Endothelial cell of umbilical vein (primary cell): ENCODE measurements at regions of chr1 and their contacts with region 1.

Region 1: DNA sequence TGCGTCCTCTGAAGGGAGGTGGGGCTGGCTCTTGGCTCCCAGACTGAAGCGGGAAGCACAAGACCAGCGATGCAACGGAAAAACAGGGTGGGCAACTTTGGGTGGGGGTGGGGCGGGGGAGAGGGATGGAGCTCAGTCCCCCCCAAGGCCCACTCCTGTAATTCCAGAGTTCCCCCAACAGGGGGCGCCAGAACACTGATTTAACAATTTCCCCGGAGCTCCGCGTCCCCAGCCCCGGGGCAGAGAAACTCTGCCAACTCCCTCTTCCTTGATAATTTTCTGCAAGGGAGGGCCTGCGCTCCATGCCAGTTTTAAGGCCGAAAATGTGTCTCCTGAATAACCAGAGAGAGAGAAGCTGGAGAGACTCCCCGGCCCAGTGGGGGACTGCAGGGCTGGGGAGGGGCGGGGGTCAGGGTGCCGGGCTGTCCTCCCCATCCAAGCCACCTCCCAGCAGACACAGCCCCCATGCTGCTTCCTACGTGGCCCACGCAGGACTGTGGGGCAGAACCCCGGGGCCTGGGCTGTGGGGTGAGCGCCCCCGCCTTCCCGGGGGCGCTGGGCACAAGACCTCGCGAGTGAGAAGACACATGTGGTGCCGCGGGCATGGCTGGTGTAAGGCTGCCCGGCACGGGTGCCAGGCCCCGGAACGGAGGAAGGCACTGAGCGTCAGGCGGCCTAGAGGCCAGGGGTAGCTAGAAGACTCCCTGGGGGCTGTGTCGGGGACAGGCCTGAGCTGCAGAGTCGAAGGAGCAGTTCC is 51.4 kb downstream of the KIF21B start:
- DNase-seq: peak; percentile 39
- H3K4me3 ChIP-seq: no peak overlapping the region
- H3K27ac ChIP-seq: no peak overlapping the region
- H3K4me1 ChIP-seq: no peaks in the 10 kb centered on the region
- H3K27me3 ChIP-seq: no peaks in the 10 kb centered on the region
- CTCF ChIP-seq: peak; percentile 52 to 72
- POLR2A ChIP-seq: no peak

Region 2: GRCh38 chr1:200890818-200891773 is 81.0 kb before region 1 on chr1:
- CTCF ChIA-PET with region 1: interaction called, 11 read pairs
- POLR2A ChIA-PET with region 1: no interaction called
- dilution Hi-C with region 1: no loop called
- intact Hi-C with region 1: no loop called
- DNase-seq: peak; percentile 27
- H3K4me3 ChIP-seq: peak overlapping the region in 2 of 3 experiments; percentile 30 to 47
- H3K27ac ChIP-seq: no peak overlapping the region
- H3K4me1 ChIP-seq: no peaks in the 10 kb centered on the region
- H3K27me3 ChIP-seq: peaks cover 39 to 46% of the 10 kb centered on the region in 2 experiments
- CTCF ChIP-seq: peak; percentile 50
- POLR2A ChIP-seq: no peak

Region 3: DNA sequence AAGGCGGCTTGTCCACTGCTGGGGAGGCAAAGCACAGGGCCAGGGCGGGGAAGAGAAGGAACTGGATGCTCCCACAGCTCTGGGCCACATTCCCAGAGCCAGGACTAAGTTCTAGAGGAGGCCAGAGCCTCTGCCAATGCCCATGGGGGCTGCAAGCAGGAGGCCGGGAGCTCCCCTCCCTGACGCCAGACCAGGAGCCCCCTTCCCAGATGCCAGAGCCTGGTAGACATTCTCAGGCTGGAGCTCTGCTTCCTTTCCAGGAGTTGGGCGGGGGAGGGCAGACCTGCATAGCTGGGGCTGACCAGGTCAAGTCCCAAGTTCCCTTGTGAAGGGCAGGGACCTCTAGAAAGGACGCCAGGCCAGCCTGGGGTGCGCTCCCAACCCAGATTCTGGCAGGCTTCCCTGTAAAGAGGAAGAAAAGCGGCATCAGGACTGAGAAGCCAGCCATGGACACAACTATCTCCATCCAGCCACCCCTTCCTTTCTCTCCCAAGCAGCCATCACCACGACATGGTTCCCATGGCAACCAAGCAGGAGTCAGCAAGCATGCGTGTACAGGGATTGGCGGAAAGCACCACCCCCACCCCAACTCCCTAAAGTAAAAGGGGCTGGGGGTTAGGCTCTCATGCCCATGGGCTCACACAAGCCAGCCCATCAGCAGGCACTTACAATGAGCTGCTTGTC is 38.0 kb after region 1 on chr1:
- CTCF ChIA-PET with region 1: interaction called, 44 read pairs
- POLR2A ChIA-PET with region 1: no interaction called
- dilution Hi-C with region 1: no loop called
- intact Hi-C with region 1: no loop called
- DNase-seq: no peak
- H3K4me3 ChIP-seq: no peak overlapping the region
- H3K27ac ChIP-seq: no peak overlapping the region
- H3K4me1 ChIP-seq: peaks cover 19% of the 10 kb centered on the region
- H3K27me3 ChIP-seq: no peaks in the 10 kb centered on the region
- CTCF ChIP-seq: no peak
- POLR2A ChIP-seq: no peak

Region 4: GRCh38 chr1:201042779-201043461 is 70.8 kb after region 1 on chr1:
- CTCF ChIA-PET with region 1: interaction called, 586 read pairs
- POLR2A ChIA-PET with region 1: no interaction called
- dilution Hi-C with region 1: no loop called
- intact Hi-C with region 1: loop called (anchors 1 kb)
- DNase-seq: peak; percentile 73
- H3K4me3 ChIP-seq: no peak overlapping the region
- H3K27ac ChIP-seq: no peak overlapping the region
- H3K4me1 ChIP-seq: no peaks in the 10 kb centered on the region
- H3K27me3 ChIP-seq: peaks cover 0 to 2% of the 10 kb centered on the region in 2 experiments
- CTCF ChIP-seq: peak; percentile 86 to 91
- POLR2A ChIP-seq: no peak

Region 5: DNA sequence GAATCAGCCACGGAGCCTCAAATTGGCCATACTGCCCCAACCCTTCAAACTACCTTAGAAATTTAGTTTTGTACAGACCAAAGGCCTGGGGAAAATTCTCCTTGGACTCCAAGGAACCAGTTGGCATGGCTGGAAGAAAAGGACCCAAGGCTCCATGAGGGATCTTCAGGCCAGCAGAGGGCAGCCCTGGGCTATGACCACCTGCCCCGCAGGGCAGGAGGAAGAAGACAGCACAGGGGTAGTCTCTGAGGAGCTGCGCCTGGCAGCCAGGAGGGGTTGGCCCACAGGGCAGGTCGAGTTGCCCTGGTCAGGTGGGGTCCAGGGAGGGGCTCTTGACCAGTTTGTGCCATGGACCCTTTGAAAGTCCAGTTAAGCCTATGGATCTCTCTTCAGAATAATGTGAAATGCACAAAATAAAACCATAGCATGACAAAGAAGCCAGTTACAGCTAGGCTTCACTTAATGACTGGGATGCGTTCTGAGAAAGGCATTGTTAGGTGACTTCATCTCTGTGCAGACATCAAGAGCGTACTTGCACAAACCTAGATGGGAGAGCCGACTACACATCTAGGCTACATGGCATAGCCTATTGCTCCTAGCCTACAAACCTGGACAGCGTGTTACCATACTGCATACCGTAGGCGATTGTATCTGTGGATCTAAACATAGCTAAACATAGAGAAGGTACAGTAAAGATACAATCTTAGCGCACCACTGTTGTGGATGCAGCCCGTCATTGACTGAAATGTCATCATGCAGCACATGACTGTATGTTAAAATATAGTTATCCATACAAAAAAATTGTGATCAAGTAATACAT is 114.0 kb after region 1 on chr1:
- CTCF ChIA-PET with region 1: interaction called, 22 read pairs
- POLR2A ChIA-PET with region 1: no interaction called
- dilution Hi-C with region 1: no loop called
- intact Hi-C with region 1: no loop called
- DNase-seq: peak; percentile 31
- H3K4me3 ChIP-seq: no peak overlapping the region
- H3K27ac ChIP-seq: no peak overlapping the region
- H3K4me1 ChIP-seq: no peaks in the 10 kb centered on the region
- H3K27me3 ChIP-seq: peaks cover 7% of the 10 kb centered on the region in 2 experiments
- CTCF ChIP-seq: peak; percentile 36 to 70
- POLR2A ChIP-seq: no peak

Region 6: DNA sequence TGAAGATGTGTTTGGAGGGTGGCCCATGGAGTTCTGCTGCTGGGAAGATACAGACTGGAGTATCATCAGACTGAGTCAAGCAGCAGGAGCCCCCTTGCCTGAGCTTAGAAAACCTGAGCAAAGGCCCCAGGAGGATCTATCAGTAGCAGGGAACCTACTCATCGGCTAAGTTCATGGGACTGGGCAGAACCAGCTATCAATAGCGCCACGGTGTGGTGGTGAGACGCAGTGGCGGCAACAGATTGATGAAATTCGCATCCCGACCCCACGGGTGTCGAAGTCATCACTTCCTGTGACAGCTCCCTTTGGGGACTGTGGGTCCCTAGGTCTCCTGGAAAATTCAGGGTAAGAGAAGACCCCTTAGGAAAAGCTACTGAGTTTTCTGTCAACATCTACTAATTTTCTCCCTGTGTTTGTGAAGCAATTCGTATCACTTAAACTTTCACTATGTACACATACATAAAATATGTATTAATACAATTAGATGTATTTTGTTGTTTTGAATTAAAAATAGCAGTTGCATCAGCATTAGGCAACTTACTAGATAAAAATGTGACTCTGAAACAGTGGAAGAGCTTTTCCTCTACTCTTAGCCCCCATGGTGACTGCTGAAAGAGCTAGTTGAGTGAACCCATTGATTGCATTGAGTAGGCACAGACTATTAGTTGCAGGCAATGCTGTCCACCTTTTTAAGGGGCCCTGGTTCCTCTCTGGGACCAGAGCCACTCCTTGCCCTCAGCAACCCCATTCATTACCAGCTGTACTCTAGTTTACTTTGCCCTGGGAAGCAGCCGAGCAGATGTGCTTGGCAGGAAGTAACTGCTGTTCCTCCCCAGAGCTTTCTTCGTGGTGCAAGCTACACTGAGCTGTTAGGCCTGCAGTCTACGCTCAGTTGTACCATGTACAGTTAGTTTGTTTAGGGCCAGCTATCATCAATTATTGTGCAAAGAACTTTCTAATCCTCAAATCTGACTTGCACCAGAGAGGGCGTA is 147.4 kb after region 1 on chr1:
- CTCF ChIA-PET with region 1: interaction called, 81 read pairs
- POLR2A ChIA-PET with region 1: no interaction called
- dilution Hi-C with region 1: no loop called
- intact Hi-C with region 1: loop called (anchors 1 kb)
- DNase-seq: peak; percentile 47
- H3K4me3 ChIP-seq: no peak overlapping the region
- H3K27ac ChIP-seq: no peak overlapping the region
- H3K4me1 ChIP-seq: no peaks in the 10 kb centered on the region
- H3K27me3 ChIP-seq: peaks cover 36 to 55% of the 10 kb centered on the region in 2 experiments
- CTCF ChIP-seq: peak; percentile 69 to 79
- POLR2A ChIP-seq: no peak